ENCODE measurements at regions of chr4 and their contacts with region 1.

Region 1: GRCh38 chr4:1870578-1871443 is at the start of gene NSD2:
- DNase-seq: peak; percentile 87 to 95
- H3K4me3 ChIP-seq: peak within 1 kb of the TSS; percentile 69
- H3K4me3 Mint-ChIP-seq: peak within 1 kb of the TSS; percentile 93
- H3K27ac Mint-ChIP-seq: peak within 1 kb of the TSS; percentile 89
- H3K4me1 ChIP-seq: peaks cover 55% of the 10 kb centered on the region
- H3K4me1 Mint-ChIP-seq: peaks cover 21% of the 10 kb centered on the region
- H3K27me3 ChIP-seq: no peaks in the 10 kb centered on the region
- H3K27me3 Mint-ChIP-seq: no peaks in the 10 kb centered on the region
- CTCF ChIP-seq: no peak
- total RNA-seq, gene NSD2: 113 and 122 TPM in 2 replicates

Region 2: GRCh38 chr4:1640190-1640589 is 230.6 kb before region 1 on chr4:
- CTCF ChIA-PET with region 1: no interaction called
- POLR2A ChIA-PET with region 1: no interaction called
- intact Hi-C with region 1: no loop called
- DNase-seq: no peak
- H3K4me3 ChIP-seq: no peak overlapping the region
- H3K4me3 Mint-ChIP-seq: no peak overlapping the region
- H3K27ac Mint-ChIP-seq: no peak overlapping the region
- H3K4me1 ChIP-seq: no peaks in the 10 kb centered on the region
- H3K4me1 Mint-ChIP-seq: no peaks in the 10 kb centered on the region
- H3K27me3 ChIP-seq: no peaks in the 10 kb centered on the region
- H3K27me3 Mint-ChIP-seq: no peaks in the 10 kb centered on the region
- CTCF ChIP-seq: no peak

Region 3: DNA sequence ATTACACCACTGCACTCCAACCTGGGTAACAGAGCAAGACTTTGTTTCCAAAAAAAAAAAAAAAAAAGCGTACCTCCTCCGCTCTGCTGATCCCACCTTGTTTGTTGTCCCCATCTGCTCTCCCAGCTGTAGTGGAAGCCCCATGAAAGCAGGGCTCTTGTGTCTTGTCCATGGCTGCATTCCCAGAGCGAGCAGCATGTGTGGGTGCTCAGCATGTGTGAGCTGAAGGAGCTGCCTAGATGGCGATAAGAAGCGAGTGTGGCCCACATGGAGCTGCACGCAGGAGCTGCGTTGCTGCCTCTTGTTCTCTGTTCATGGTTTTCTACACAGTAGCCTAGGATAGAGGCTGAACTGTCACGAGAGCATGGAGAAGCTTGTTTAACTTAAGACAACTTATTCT is 12.8 kb after region 1 on chr4:
- CTCF ChIA-PET with region 1: no interaction called
- POLR2A ChIA-PET with region 1: interaction called, 11 read pairs
- intact Hi-C with region 1: no loop called
- DNase-seq: no peak
- H3K4me3 ChIP-seq: no peak overlapping the region
- H3K4me3 Mint-ChIP-seq: no peak overlapping the region
- H3K27ac Mint-ChIP-seq: no peak overlapping the region
- H3K4me1 ChIP-seq: peaks cover 14% of the 10 kb centered on the region
- H3K4me1 Mint-ChIP-seq: peaks cover 23% of the 10 kb centered on the region
- H3K27me3 ChIP-seq: no peaks in the 10 kb centered on the region
- H3K27me3 Mint-ChIP-seq: no peaks in the 10 kb centered on the region
- CTCF ChIP-seq: no peak

Region 4: DNA sequence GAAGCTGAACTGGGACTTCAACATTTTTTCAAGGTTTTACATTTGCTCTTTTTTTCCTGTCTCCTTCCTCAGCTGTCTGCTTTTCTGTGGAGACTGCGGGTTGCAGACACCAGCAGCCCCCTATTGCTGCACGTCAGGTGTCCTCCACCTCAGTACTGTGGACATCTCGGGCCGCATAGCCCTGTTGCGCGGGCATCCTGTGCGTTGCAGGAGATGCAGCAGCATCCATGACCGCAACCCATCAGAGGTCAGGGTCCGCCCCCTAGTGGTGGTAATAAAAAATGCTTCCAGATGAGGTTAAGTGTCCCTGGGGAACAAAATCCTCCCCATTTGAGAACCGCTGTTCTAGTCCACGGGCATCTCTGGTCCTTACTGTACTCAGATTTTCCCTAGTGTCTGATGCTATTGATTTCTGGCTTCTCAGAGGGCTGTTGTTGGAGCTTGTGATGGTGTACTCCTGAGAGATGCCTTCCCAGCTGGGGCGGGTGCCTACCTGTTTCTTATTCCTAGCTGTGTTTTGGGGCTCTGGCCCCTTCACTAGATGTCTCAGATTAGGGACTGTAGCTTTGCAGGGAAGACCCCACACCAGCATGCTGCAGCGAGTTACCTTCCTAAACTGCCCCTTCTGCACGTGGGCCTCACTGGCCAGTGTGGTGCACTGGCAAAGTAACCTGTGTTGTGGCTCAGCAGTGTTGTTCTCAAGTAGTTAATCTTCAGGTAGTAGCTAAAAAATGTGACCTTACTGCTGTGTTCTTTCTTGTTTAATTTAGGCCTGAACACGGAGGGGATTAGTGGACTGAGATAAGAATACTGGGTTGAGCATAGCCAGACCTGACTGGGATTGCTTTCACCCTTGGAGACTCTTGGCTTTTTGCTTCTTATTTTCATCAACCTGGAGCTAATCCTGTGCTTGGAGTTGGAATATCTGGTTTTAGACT is 28.6 kb after region 1 on chr4:
- CTCF ChIA-PET with region 1: interaction called, 10 read pairs
- POLR2A ChIA-PET with region 1: interaction called, 5 read pairs
- intact Hi-C with region 1: loop called (anchors 2 kb)
- DNase-seq: peak; percentile 74 to 82
- H3K4me3 ChIP-seq: no peak overlapping the region
- H3K4me3 Mint-ChIP-seq: no peak overlapping the region
- H3K27ac Mint-ChIP-seq: no peak overlapping the region
- H3K4me1 ChIP-seq: peaks cover 16% of the 10 kb centered on the region
- H3K4me1 Mint-ChIP-seq: peaks cover 8% of the 10 kb centered on the region
- H3K27me3 ChIP-seq: no peaks in the 10 kb centered on the region
- H3K27me3 Mint-ChIP-seq: no peaks in the 10 kb centered on the region
- CTCF ChIP-seq: peak; percentile 76 to 79

Region 5: GRCh38 chr4:1910643-1911042 is 39.8 kb after region 1 on chr4:
- CTCF ChIA-PET with region 1: interaction called, 4 read pairs
- POLR2A ChIA-PET with region 1: interaction called, 5 read pairs
- intact Hi-C with region 1: loop called (anchors 5 kb)
- DNase-seq: peak in 1 of 2 experiments; percentile 67
- H3K4me3 ChIP-seq: no peak overlapping the region
- H3K4me3 Mint-ChIP-seq: no peak overlapping the region
- H3K27ac Mint-ChIP-seq: no peak overlapping the region
- H3K4me1 ChIP-seq: no peaks in the 10 kb centered on the region
- H3K4me1 Mint-ChIP-seq: peaks cover 23% of the 10 kb centered on the region
- H3K27me3 ChIP-seq: no peaks in the 10 kb centered on the region
- H3K27me3 Mint-ChIP-seq: no peaks in the 10 kb centered on the region
- CTCF ChIP-seq: peak; percentile 51 to 63